CD8-positive, alpha-beta T cell (primary cell): ENCODE measurements at regions of chr2 and their contacts with region 1.

Region 1: GRCh38 chr2:238203094-238203972 is at the start of gene ILKAP:
- DNase-seq: peak; percentile 78 to 94 (median 90)
- ATAC-seq: peak; percentile 97
- H3K4me3 ChIP-seq: peak within 1 kb of the TSS; percentile 65 to 71
- H3K4me3 Mint-ChIP-seq: peak within 1 kb of the TSS; percentile 89
- H3K27ac ChIP-seq: peak within 1 kb of the TSS; percentile 71 to 84
- H3K27ac Mint-ChIP-seq: peak within 1 kb of the TSS; percentile 92
- H3K4me1 ChIP-seq: peaks cover 43% of the 10 kb centered on the region
- H3K4me1 Mint-ChIP-seq: peaks cover 46% of the 10 kb centered on the region
- H3K27me3 ChIP-seq: no peaks in the 10 kb centered on the region
- H3K27me3 Mint-ChIP-seq: peaks cover 2% of the 10 kb centered on the region
- CTCF ChIP-seq: no peak
- total RNA-seq, gene ILKAP: 133 to 144 TPM

Region 2: DNA sequence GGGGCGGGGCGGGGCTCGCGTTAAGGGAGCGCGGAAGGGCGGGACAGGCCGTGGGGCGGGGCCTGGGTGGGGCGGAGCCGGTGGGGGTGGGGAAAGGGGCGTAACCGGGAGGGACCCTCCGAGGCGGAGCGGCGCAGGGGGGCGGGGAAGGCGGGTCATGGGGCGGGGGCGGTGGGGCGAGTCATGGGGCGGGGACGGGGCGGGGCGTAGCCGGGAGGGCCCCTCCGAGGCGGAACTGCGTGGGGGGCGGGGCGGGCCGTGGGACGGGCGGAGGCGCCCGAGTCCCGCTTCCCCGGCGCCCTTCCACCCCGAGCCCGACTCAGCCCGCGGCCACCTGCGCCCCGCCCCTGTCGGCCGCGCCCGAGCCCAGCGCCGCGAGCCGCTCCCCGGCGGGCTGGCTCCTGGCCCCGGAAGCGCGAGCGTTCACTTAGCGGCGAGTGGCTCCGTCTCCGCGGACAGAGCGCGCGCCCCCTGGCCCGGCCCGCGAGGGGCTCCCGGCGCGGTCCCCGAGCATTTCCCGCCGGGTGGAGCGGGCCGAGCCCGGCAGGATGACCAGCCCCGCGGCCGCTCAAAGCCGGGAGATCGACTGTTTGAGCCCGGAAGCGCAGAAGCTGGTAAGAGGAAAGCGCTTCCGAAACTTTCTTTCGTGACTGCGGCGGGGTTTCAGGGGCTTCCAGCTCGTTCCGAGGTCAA is 511.3 kb before region 1 on chr2:
- CTCF ChIA-PET with region 1: no interaction called
- POLR2A ChIA-PET with region 1: no interaction called
- intact Hi-C with region 1: loop called in 1 of 2 experiments (anchors 10 kb)
- DNase-seq: peak; percentile 91 to 97 (median 95)
- ATAC-seq: peak; percentile 58
- H3K4me3 ChIP-seq: peak overlapping the region; percentile 80 to 85
- H3K4me3 Mint-ChIP-seq: peak overlapping the region; percentile 81
- H3K27ac ChIP-seq: peak overlapping the region; percentile 81 to 90
- H3K27ac Mint-ChIP-seq: peak overlapping the region; percentile 89
- H3K4me1 ChIP-seq: peaks cover 75% of the 10 kb centered on the region
- H3K4me1 Mint-ChIP-seq: peaks cover 75% of the 10 kb centered on the region
- H3K27me3 ChIP-seq: no peaks in the 10 kb centered on the region
- H3K27me3 Mint-ChIP-seq: no peaks in the 10 kb centered on the region
- CTCF ChIP-seq: no peak

Region 3: DNA sequence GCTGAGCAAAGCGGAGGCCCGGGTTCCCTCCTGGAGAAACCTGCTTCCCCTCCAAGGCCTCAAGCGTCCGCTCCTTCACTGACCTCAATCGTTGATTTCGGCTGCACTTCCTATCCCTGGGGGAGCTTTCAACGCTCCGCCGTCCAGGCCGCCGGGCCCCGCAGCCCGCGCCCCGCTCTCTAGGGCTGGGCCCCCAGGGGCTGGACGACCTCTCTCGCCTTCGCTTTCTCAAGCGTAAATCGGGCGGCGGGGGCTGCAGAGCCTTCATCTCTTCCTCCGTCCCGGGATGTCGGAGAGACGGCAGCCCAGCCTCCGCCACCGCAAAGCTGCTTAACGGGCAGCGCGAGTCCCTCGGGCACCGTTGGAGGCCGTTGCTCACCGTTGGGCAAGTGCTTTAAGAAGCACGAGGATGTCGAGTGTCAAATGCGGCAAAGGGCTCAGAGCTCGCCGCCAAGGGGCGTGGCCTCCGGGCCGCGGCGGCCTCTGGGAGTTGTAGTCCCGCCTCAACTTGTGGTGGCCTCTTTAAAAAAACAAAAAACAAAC is 28.0 kb after region 1 on chr2:
- CTCF ChIA-PET with region 1: interaction called, 5 read pairs
- POLR2A ChIA-PET with region 1: interaction called, 3 read pairs
- intact Hi-C with region 1: loop called (anchors 1 kb)
- DNase-seq: peak; percentile 61 to 89 (median 81)
- ATAC-seq: peak; percentile 88
- H3K4me3 ChIP-seq: peak overlapping the region; percentile 49 to 79
- H3K4me3 Mint-ChIP-seq: peak overlapping the region; percentile 86
- H3K27ac ChIP-seq: peak overlapping the region in 1 of 2 experiments; percentile 10
- H3K27ac Mint-ChIP-seq: no peak overlapping the region
- H3K4me1 ChIP-seq: peaks cover 20% of the 10 kb centered on the region
- H3K4me1 Mint-ChIP-seq: peaks cover 25% of the 10 kb centered on the region
- H3K27me3 ChIP-seq: no peaks in the 10 kb centered on the region
- H3K27me3 Mint-ChIP-seq: peaks cover 19% of the 10 kb centered on the region
- CTCF ChIP-seq: no peak

Region 4: DNA sequence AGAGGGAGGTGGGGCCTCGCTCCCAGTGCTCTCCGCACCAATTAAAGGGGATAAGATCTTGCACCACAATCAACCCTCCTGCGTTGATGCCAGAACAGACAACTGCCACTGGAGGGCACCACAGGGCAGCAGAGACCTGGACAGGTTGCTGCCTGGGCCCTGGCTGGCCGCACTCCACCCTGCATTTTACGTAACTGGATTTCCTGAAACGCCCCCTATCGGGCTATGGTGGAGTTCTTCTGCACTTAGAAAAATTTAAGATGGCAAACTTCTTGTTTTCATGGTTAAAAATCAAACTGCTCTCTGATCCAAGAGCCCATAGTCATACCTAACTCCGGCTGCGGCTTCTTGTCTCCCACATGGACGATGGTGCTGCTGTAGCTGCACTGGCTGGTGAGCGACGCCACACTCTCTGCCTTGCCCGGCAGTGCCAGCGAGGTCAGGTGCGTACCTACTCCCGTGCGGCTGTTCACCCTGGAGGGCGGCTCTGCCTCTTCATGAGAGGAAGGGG is 53.3 kb after region 1 on chr2:
- CTCF ChIA-PET with region 1: no interaction called
- POLR2A ChIA-PET with region 1: no interaction called
- intact Hi-C with region 1: loop called in 1 of 2 experiments (anchors 2 kb)
- DNase-seq: peak; percentile 37 to 85 (median 72)
- ATAC-seq: peak; percentile 95
- H3K4me3 ChIP-seq: no peak overlapping the region
- H3K4me3 Mint-ChIP-seq: no peak overlapping the region
- H3K27ac ChIP-seq: no peak overlapping the region
- H3K27ac Mint-ChIP-seq: no peak overlapping the region
- H3K4me1 ChIP-seq: no peaks in the 10 kb centered on the region
- H3K4me1 Mint-ChIP-seq: no peaks in the 10 kb centered on the region
- H3K27me3 ChIP-seq: no peaks in the 10 kb centered on the region
- H3K27me3 Mint-ChIP-seq: no peaks in the 10 kb centered on the region
- CTCF ChIP-seq: peak; percentile 80

Region 5: GRCh38 chr2:238320246-238320647 is 116.9 kb after region 1 on chr2 and contains the start of gene TRAF3IP1:
- CTCF ChIA-PET with region 1: no interaction called
- POLR2A ChIA-PET with region 1: no interaction called
- intact Hi-C with region 1: loop called in 1 of 2 experiments (anchors 5 kb)
- DNase-seq: peak; percentile 70 to 92 (median 84)
- ATAC-seq: peak; percentile 94
- H3K4me3 ChIP-seq: peak within 1 kb of the TSS; percentile 53 to 58
- H3K4me3 Mint-ChIP-seq: peak within 1 kb of the TSS; percentile 84
- H3K27ac ChIP-seq: no peak within 1 kb of the TSS
- H3K27ac Mint-ChIP-seq: peak within 1 kb of the TSS; percentile 22
- H3K4me1 ChIP-seq: peaks cover 19% of the 10 kb centered on the region
- H3K4me1 Mint-ChIP-seq: peaks cover 24% of the 10 kb centered on the region
- H3K27me3 ChIP-seq: no peaks in the 10 kb centered on the region
- H3K27me3 Mint-ChIP-seq: peaks cover 4% of the 10 kb centered on the region
- CTCF ChIP-seq: no peak
- total RNA-seq, gene TRAF3IP1: 6.1 to 8.6 TPM

Region 6: DNA sequence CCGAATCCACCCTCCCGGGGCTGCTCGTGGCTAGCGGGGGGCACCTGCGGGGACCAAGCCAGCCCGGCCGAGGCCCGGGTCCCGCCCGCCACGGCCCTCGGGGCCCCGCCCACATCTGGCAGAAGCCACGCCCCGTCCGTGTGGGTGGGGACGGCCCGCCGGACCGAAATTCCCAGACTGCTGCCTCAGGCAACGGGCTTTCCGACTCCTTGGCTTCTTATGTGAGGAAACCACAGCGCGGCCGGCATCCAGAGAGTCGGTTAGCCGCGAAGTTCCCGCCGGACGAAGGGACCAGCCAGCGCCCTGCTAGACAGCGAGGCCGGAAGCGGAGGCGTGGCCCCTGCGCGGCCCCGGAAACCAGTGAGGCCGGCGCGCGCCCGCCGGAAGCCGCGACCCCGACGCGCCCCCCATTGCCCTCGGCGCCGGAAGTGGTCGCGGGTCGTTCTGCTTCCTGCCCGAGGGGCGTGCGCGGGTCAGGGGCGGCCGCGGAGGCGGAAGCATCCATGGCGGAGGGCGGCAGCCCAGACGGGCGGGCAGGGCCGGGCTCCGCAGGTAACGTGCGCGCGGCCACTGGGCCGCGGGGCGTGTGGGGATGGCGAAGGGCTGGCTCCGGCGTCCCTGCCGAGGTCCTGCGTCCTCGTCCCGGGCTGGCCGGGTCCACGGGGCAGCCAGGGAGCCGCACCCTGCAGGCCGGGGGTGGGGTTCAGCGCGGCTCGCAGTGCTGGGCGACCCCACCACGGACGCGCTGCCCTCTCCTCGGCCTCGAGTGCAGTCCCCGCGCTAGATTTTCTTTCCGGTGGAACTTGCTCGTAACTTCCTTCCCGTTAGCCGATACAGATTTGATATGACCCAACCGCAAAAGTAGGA is 223.5 kb after region 1 on chr2 and contains the start of gene ASB1:
- CTCF ChIA-PET with region 1: no interaction called
- POLR2A ChIA-PET with region 1: no interaction called
- intact Hi-C with region 1: loop called in 1 of 2 experiments (anchors 2 kb)
- DNase-seq: peak; percentile 62 to 94 (median 83)
- ATAC-seq: peak; percentile 78
- H3K4me3 ChIP-seq: peak within 1 kb of the TSS; percentile 66 to 79
- H3K4me3 Mint-ChIP-seq: peak within 1 kb of the TSS; percentile 92
- H3K27ac ChIP-seq: peak within 1 kb of the TSS; percentile 78 to 87
- H3K27ac Mint-ChIP-seq: peak within 1 kb of the TSS; percentile 97
- H3K4me1 ChIP-seq: peaks cover 37% of the 10 kb centered on the region
- H3K4me1 Mint-ChIP-seq: peaks cover 49% of the 10 kb centered on the region
- H3K27me3 ChIP-seq: no peaks in the 10 kb centered on the region
- H3K27me3 Mint-ChIP-seq: no peaks in the 10 kb centered on the region
- CTCF ChIP-seq: no peak
- total RNA-seq, gene ASB1: 16.3 to 25.3 TPM